ENCODE measurements at regions of chr11 and their contacts with region 1.

Region 1: DNA sequence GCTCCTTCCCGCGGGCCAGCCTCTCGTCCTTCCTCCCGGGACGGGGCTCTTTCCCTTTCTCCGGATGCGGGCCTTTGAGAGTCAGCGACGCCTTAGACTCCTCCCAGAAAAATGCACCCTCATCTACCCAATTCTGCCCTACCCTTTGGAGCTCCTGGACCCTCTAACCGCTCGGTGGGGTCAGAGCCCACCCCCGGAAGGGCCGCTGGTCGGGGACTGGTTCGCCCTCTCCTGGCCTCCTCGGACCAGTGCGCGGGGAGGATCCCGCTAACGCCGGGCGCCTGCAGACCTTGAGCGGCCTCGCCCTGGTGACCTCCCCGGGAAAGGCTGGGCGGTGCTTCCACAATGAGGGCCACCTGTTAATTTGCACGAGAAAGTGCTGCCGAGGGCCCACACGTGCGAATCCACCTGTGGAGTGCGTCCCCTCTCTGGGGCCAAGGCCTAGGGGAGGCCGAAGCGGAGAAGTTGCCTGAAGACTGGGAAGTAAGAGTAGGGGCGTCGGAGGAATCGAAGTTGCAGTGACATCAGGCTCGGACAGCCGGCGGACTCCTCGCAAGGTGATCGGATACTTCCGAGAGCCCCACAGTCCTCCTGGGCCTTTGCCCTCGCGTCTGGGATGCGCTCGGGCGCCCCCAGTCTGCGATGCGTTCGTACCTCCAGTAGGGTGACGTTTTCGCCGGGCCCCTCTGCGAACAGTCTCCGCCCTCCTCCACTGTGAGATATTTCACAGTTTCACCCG is 61.5 kb downstream of the ENDOD1 start:
- DNase-seq: peak; percentile 91 to 93 (median 91)
- H3K4me3 ChIP-seq: peak overlapping the region; percentile 45 to 87
- H3K4me3 Mint-ChIP-seq: peak overlapping the region; percentile 85 to 96 (median 90)
- H3K27ac ChIP-seq: peak overlapping the region; percentile 80
- H3K27ac Mint-ChIP-seq: peak overlapping the region; percentile 90 to 99 (median 97)
- H3K4me1 ChIP-seq: peaks cover 35% of the 10 kb centered on the region
- H3K4me1 Mint-ChIP-seq: peaks cover 26 to 44% (median 36%) of the 10 kb centered on the region in 4 donors
- H3K27me3 ChIP-seq: no peaks in the 10 kb centered on the region
- H3K27me3 Mint-ChIP-seq: peaks cover 2 to 8% of the 10 kb centered on the region in 2 donors

Region 2: DNA sequence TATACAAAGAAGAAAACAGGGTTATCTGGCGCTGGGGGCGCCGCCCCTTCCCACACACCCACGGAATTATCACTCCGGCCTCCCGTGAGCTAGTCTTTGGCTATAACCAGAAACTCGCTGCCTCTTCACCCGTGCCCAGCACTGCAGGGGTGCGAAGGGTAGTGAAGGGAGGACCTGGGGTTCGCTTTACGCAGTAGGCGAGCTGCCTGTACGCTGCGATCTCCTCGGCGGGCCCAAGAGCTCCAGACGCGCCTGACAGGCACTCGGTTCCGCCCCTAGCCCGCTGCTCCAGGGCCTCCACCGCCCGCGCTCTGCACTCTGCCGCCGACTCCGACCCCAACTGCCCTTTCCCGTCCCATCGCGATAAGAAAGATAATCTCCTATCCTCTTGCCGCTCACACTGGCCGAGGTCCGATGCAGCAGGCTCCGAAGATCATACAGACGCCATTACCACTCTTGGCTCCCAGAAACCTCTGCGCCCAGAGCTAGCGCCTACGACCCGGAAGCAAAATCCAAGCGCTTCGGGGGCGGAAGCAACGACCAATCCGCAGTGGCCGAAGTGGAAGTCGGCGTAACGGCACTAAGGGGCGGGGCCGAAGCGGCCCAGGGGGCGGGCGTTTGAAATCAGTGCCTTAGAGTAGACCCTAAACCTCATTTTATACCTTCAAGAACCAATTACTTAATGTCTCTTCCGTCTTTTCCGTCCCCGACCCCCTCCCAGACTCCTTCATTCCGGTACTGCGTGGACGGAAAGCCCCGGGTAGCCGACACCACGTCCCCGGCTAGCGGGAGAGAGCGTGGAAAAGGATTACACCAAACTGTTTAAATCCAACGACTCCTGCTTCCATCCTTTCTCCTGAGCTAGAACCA is 177.8 kb before region 1 on chr11 and contains the starts of genes CWC15 and KDM4D:
- CTCF ChIA-PET with region 1: interaction called, 3 read pairs
- POLR2A ChIA-PET with region 1: no interaction called
- intact Hi-C with region 1: loop called (anchors 1 kb)
- DNase-seq: peak; percentile 91 to 96 (median 93)
- H3K4me3 ChIP-seq: peak within 1 kb of the TSS; percentile 61 to 95
- H3K4me3 Mint-ChIP-seq: peak within 1 kb of the TSS; percentile 94 to 100 (median 98)
- H3K27ac ChIP-seq: peak within 1 kb of the TSS; percentile 92
- H3K27ac Mint-ChIP-seq: peak within 1 kb of the TSS; percentile 84 to 100 (median 98)
- H3K4me1 ChIP-seq: peaks cover 16% of the 10 kb centered on the region
- H3K4me1 Mint-ChIP-seq: peaks cover 14 to 35% (median 25%) of the 10 kb centered on the region in 4 donors
- H3K27me3 ChIP-seq: no peaks in the 10 kb centered on the region
- H3K27me3 Mint-ChIP-seq: no peaks in the 10 kb centered on the region
- total RNA-seq, gene CWC15: 62.7 to 69.4 TPM
- total RNA-seq, gene KDM4D: 0.32 to 0.39 TPM

Region 3: DNA sequence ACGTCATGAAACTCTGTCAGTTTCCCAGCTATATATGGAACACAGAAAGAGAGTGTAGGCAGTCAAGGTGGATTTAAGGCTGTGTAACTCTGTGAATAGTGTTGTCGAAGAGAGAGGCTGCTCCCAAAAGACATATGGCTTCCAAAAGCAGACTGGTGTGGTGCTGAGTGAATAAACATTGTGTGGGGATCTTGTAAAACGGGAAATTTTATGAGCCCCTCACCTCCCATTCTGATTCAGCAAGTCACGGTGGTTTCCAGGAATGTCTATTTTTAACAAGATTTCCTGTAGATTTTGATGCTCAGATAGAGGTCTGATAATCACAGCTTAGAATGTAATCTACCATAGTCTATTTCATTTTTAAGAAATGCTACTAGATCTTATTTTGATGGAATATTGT is 12.0 kb after region 1 on chr11:
- CTCF ChIA-PET with region 1: interaction called, 23 read pairs
- POLR2A ChIA-PET with region 1: interaction called, 13 read pairs
- intact Hi-C with region 1: no loop called
- DNase-seq: no peak
- H3K4me3 ChIP-seq: no peak overlapping the region
- H3K4me3 Mint-ChIP-seq: peak overlapping the region in 1 of 8 donors; percentile 14
- H3K27ac ChIP-seq: no peak overlapping the region
- H3K27ac Mint-ChIP-seq: peak overlapping the region in 4 of 7 donors; percentile 6 to 78 (median 50)
- H3K4me1 ChIP-seq: peaks cover 16% of the 10 kb centered on the region
- H3K4me1 Mint-ChIP-seq: peaks cover 19 to 35% (median 22%) of the 10 kb centered on the region in 4 donors
- H3K27me3 ChIP-seq: no peaks in the 10 kb centered on the region
- H3K27me3 Mint-ChIP-seq: no peaks in the 10 kb centered on the region

Region 4: DNA sequence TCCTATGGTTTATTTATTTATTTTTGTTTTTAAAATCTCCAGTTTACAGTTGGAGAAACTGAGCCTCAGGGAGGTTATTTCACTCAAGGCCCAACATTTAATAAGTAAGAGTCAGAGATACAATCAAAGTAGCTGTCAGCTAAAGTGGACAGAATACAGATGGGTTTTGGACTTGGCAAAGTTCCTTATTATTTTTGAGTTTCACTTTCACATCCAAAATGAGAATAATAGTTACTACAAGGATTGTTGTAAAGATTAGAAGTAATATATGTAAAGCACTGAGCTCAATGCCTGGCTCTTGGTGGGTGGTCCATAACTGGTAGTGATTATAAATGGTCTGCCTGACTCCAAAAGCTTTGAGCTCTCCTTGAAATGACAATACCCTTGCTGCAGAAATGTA is 167.4 kb after region 1 on chr11:
- CTCF ChIA-PET with region 1: no interaction called
- POLR2A ChIA-PET with region 1: no interaction called
- intact Hi-C with region 1: no loop called
- DNase-seq: no peak
- H3K4me3 ChIP-seq: no peak overlapping the region
- H3K4me3 Mint-ChIP-seq: no peak overlapping the region
- H3K27ac ChIP-seq: no peak overlapping the region
- H3K27ac Mint-ChIP-seq: no peak overlapping the region
- H3K4me1 ChIP-seq: no peaks in the 10 kb centered on the region
- H3K4me1 Mint-ChIP-seq: peaks cover 0 to 3% (median 0%) of the 10 kb centered on the region in 4 donors
- H3K27me3 ChIP-seq: no peaks in the 10 kb centered on the region
- H3K27me3 Mint-ChIP-seq: no peaks in the 10 kb centered on the region

Region 5: DNA sequence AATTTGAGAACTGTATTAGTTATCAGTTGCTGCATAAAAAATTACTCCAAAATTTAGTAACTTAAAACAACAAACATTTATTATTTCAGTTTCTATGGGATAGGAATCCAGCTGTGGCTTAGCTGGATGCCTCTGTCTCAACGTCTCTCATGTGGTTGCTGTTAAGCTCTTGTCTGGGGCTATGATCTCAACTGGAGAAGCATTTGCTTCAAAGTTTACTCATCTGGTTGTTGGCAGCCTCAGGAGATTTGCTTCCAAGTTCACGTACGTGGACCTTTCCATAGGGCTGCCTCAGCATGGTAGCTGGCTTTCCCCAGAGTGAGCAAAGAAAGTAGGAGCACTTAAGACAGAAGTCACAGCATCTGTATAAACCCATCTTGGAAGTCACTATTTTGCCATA is 224.8 kb after region 1 on chr11:
- CTCF ChIA-PET with region 1: interaction called, 11 read pairs
- POLR2A ChIA-PET with region 1: no interaction called
- intact Hi-C with region 1: no loop called
- DNase-seq: no peak
- H3K4me3 ChIP-seq: no peak overlapping the region
- H3K4me3 Mint-ChIP-seq: no peak overlapping the region
- H3K27ac ChIP-seq: no peak overlapping the region
- H3K27ac Mint-ChIP-seq: no peak overlapping the region
- H3K4me1 ChIP-seq: no peaks in the 10 kb centered on the region
- H3K4me1 Mint-ChIP-seq: peaks cover 0 to 1% (median 0%) of the 10 kb centered on the region in 4 donors
- H3K27me3 ChIP-seq: no peaks in the 10 kb centered on the region
- H3K27me3 Mint-ChIP-seq: peaks cover 0 to 6% of the 10 kb centered on the region in 2 donors

Region 6: DNA sequence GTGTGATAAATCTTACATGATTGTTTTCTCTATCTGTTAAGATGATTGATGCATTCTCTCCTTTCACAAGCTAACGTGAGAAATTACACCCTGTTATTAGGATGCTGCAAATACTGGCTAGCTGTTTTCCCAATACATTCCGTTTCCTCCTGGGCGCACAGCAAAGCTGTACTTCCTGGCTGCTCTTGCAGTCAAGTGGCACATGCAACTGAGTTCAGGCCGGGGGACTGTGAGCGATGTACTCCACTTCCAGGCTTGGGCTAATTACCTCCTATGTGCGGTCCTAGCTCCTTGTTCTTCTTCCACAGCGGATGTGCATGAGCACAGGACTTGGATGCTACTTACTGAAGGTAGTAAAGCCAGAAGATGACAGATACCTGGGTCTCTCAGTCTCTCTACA is 314.8 kb after region 1 on chr11:
- CTCF ChIA-PET with region 1: no interaction called
- POLR2A ChIA-PET with region 1: no interaction called
- intact Hi-C with region 1: no loop called
- DNase-seq: no peak
- H3K4me3 ChIP-seq: no peak overlapping the region
- H3K4me3 Mint-ChIP-seq: no peak overlapping the region
- H3K27ac ChIP-seq: no peak overlapping the region
- H3K27ac Mint-ChIP-seq: no peak overlapping the region
- H3K4me1 ChIP-seq: no peaks in the 10 kb centered on the region
- H3K4me1 Mint-ChIP-seq: peaks cover 0 to 4% (median 0%) of the 10 kb centered on the region in 4 donors
- H3K27me3 ChIP-seq: no peaks in the 10 kb centered on the region
- H3K27me3 Mint-ChIP-seq: peaks cover 0 to 2% of the 10 kb centered on the region in 2 donors

Region 7: GRCh38 chr11:95764267-95764898 is 613.3 kb after region 1 on chr11:
- CTCF ChIA-PET with region 1: interaction called, 337 read pairs
- POLR2A ChIA-PET with region 1: interaction called, 41 read pairs
- intact Hi-C with region 1: loop called (anchors 1 kb)
- DNase-seq: peak in 4 of 5 donors; percentile 65 to 69 (median 67)
- H3K4me3 ChIP-seq: no peak overlapping the region
- H3K4me3 Mint-ChIP-seq: no peak overlapping the region
- H3K27ac ChIP-seq: no peak overlapping the region
- H3K27ac Mint-ChIP-seq: no peak overlapping the region
- H3K4me1 ChIP-seq: no peaks in the 10 kb centered on the region
- H3K4me1 Mint-ChIP-seq: no peaks in the 10 kb centered on the region
- H3K27me3 ChIP-seq: no peaks in the 10 kb centered on the region
- H3K27me3 Mint-ChIP-seq: peaks cover 0 to 2% of the 10 kb centered on the region in 2 donors

Region 8: DNA sequence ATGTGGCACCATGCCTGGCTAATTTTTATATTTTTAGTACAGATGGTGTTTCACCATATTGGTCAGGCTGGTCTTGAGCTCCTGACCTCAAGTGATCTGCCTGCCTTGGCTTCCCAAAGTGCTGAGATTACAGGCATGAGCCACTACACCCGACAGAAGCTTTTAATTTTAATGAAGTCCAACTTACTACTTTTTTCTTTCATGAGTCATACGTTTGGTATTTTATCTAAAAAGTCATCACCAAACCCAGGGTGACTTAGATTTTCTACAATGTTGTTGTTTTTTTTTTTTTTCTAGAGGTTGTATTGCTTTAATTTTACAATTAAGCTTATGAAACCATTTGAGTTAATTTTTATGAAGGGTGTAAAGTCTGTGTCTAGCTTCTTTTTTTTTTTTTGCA is 1273.6 kb after region 1 on chr11:
- CTCF ChIA-PET with region 1: no interaction called
- POLR2A ChIA-PET with region 1: no interaction called
- intact Hi-C with region 1: loop called (anchors 5 kb)
- DNase-seq: no peak
- H3K4me3 ChIP-seq: no peak overlapping the region
- H3K4me3 Mint-ChIP-seq: no peak overlapping the region
- H3K27ac ChIP-seq: no peak overlapping the region
- H3K27ac Mint-ChIP-seq: no peak overlapping the region
- H3K4me1 ChIP-seq: no peaks in the 10 kb centered on the region
- H3K4me1 Mint-ChIP-seq: peaks cover 0 to 3% (median under 1%) of the 10 kb centered on the region in 4 donors
- H3K27me3 ChIP-seq: peaks cover 4% of the 10 kb centered on the region
- H3K27me3 Mint-ChIP-seq: peaks cover 29 to 31% of the 10 kb centered on the region in 2 donors